HEK293T (cell line): ENCODE measurements at regions of chr17 and their contacts with region 1.

Region 1: GRCh38 chr17:39687811-39688518 is at the start of gene PGAP3:
- DNase-seq: peak; percentile 84

Region 2: DNA sequence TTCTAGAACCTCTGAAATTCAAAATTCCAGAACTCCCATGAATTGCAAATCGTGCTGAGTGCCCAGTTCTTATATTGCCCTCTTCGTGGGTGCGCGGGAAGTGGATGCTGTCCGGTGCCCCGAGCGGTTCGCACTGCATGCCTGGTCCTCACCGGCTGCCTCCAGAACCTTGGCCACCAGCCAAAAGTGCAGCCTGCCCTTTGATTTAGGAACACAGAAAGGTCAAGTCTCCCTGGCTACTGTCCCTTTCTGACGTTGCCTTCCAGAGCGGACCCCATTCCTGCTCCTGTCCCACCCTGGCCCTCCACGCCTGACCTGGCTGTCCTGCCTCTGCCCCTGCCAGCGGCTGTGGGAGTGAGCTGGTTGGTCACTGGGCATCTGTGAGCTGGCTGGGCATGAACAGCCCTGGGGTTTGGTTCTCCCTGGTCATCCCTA is 89.9 kb before region 1 on chr17:
- CTCF ChIA-PET with region 1: no interaction called
- POLR2A ChIA-PET with region 1: no interaction called
- DNase-seq: no peak

Region 3: DNA sequence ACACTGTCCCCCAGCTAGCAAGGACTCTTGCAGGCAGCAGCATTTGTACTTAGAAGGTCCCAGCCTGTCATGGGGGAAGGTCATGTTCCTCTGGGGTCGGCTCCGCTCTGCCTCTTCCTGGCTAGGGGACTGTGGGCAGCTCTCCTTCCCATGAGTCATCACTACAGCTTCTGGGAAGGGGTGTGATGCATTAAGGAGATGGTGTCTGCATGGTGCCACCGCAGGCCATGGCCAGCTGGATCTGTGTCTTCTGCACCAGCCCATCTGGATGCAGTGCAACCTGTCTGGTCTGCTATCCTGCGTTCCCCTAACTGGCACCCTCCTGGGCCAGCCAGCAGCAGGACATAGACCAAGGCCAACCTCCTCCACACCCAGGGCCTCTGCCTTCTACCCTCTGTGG is 44.7 kb before region 1 on chr17:
- CTCF ChIA-PET with region 1: no interaction called
- POLR2A ChIA-PET with region 1: no interaction called
- DNase-seq: no peak

Region 4: GRCh38 chr17:39668199-39668966 is 19.6 kb before region 1 on chr17 and contains the start of gene PNMT:
- CTCF ChIA-PET with region 1: interaction called, 4 read pairs
- POLR2A ChIA-PET with region 1: interaction called, 15 read pairs
- DNase-seq: peak; percentile 68

Region 5: DNA sequence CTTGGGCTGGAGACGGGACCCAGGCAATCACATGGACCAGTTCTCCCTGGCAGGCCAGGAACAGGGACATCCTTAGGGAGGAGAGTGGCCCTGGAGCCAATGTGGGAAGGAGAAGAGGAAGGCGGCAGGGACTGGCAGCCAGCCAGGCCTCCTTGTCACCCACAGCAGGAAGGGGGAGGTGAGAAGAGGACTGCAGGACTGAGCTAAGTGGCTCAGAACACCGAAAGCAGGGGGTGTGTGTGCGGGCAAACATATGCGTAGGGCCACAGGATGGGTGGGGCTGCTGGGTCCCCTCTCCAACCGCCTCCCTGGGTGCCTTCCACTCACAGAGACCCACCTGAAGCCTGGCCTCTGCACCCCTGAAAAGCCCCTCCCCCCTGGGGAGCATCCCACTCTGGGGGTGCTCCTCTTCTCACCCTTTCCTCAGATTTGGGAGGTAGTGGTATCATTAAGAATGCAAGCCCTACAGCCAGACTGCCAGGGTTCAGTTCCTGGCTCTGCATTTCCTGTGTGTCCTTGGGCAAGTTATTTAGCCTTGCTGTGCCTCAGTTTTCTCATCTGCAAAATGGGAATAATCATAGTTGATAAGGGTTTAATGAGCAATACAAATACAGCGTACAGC is 11.7 kb before region 1 on chr17:
- CTCF ChIA-PET with region 1: interaction called, 4 read pairs
- POLR2A ChIA-PET with region 1: interaction called, 15 read pairs
- DNase-seq: no peak

Region 6: GRCh38 chr17:39699818-39700147 is 11.8 kb after region 1 on chr17 and contains the start of gene ERBB2:
- CTCF ChIA-PET with region 1: interaction called, 3 read pairs
- POLR2A ChIA-PET with region 1: interaction called, 84 read pairs
- DNase-seq: peak; percentile 60

Region 7: GRCh38 chr17:39730095-39730921 is 42.3 kb after region 1 on chr17 and contains the start of gene MIEN1:
- CTCF ChIA-PET with region 1: interaction called, 3 read pairs
- POLR2A ChIA-PET with region 1: interaction called, 12 read pairs
- DNase-seq: peak; percentile 93